ENCODE measurements at regions of chr12 and their contacts with region 1.

Region 1: GRCh38 chr12:62575036-62575435 is 108.4 kb downstream of the MON2 start:
- DNase-seq: no peak
- ATAC-seq: no peak

Region 2: DNA sequence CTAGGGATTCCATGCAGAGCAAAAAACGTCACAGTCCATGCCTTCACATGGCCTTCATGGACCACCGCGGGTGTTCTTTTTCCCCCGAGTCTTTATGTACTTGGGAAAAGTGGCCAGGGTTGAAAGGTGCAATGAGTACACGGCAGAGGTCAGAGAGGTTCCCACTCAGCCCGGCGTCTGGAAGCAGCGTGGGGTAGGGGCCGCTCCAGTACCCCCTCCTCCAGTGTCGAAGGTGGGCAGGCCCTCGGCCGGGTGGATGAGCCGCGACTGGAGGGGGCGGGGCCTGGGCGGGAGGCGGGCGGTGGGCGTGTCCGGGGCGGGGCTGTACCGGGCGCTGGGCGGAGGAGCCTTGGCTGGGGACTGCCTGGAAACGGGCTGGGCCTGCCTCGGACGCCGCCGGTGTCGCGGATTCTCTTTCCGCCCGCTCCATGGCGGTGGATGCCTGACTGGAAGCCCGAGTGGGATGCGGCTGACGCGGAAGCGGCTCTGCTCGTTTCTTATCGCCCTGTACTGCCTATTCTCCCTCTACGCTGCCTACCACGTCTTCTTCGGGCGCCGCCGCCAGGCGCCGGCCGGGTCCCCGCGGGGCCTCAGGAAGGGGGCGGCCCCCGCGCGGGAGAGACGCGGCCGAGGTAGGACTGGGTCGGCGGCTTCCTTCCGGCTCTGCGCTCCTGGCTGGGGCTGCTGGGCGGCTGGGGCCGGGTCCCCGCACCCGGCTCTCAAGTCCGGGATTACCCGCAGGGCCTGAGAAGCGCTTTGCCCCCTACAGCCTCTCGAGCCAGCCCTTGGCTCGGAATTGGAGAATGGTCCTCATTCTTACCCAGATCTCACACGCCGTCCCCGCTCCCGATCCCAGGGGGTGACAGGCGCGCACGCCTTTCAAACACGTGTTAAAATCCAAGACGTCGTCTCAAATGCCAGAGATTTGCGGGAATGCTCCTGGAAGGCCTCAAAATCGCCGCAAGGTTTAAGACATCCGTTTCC is 1204.8 kb after region 1 on chr12 and contains the start of gene RXYLT1:
- intact Hi-C with region 1: loop called (anchors 5 kb)
- DNase-seq: peak; percentile 93
- ATAC-seq: peak; percentile 99
- total RNA-seq, gene RXYLT1: 18.5 TPM

Region 3: GRCh38 chr12:63917864-63918799 is 1343.1 kb after region 1 on chr12:
- intact Hi-C with region 1: loop called (anchors 5 kb)
- DNase-seq: no peak
- ATAC-seq: peak; percentile 80